ENCODE measurements at regions of chr1 and their contacts with region 1.

Region 1: GRCh38 chr1:151459331-151460046 is at the start of gene POGZ:
- DNase-seq: peak; percentile 89 to 97 (median 95)
- ATAC-seq: peak; percentile 69
- H3K4me3 ChIP-seq: peak within 1 kb of the TSS; percentile 75 to 79
- H3K4me3 Mint-ChIP-seq: peak within 1 kb of the TSS; percentile 89
- H3K27ac ChIP-seq: peak within 1 kb of the TSS; percentile 73 to 88
- H3K27ac Mint-ChIP-seq: peak within 1 kb of the TSS; percentile 93
- H3K4me1 ChIP-seq: peaks cover 18% of the 10 kb centered on the region
- H3K4me1 Mint-ChIP-seq: peaks cover 29% of the 10 kb centered on the region
- H3K27me3 ChIP-seq: peaks cover 0 to 1% of the 10 kb centered on the region in 2 experiments
- H3K27me3 Mint-ChIP-seq: peaks cover 24% of the 10 kb centered on the region
- CTCF ChIP-seq: no peak
- total RNA-seq, gene POGZ: 85.4 to 88.0 TPM

Region 2: GRCh38 chr1:150387200-150387599 is 1072.3 kb before region 1 on chr1:
- CTCF ChIA-PET with region 1: no interaction called
- POLR2A ChIA-PET with region 1: no interaction called
- intact Hi-C with region 1: no loop called
- DNase-seq: no peak
- ATAC-seq: no peak
- H3K4me3 ChIP-seq: no peak overlapping the region
- H3K4me3 Mint-ChIP-seq: no peak overlapping the region
- H3K27ac ChIP-seq: no peak overlapping the region
- H3K27ac Mint-ChIP-seq: peak overlapping the region; percentile 15
- H3K4me1 ChIP-seq: peaks cover 14% of the 10 kb centered on the region
- H3K4me1 Mint-ChIP-seq: peaks cover 54% of the 10 kb centered on the region
- H3K27me3 ChIP-seq: no peaks in the 10 kb centered on the region
- H3K27me3 Mint-ChIP-seq: no peaks in the 10 kb centered on the region
- CTCF ChIP-seq: no peak

Region 3: DNA sequence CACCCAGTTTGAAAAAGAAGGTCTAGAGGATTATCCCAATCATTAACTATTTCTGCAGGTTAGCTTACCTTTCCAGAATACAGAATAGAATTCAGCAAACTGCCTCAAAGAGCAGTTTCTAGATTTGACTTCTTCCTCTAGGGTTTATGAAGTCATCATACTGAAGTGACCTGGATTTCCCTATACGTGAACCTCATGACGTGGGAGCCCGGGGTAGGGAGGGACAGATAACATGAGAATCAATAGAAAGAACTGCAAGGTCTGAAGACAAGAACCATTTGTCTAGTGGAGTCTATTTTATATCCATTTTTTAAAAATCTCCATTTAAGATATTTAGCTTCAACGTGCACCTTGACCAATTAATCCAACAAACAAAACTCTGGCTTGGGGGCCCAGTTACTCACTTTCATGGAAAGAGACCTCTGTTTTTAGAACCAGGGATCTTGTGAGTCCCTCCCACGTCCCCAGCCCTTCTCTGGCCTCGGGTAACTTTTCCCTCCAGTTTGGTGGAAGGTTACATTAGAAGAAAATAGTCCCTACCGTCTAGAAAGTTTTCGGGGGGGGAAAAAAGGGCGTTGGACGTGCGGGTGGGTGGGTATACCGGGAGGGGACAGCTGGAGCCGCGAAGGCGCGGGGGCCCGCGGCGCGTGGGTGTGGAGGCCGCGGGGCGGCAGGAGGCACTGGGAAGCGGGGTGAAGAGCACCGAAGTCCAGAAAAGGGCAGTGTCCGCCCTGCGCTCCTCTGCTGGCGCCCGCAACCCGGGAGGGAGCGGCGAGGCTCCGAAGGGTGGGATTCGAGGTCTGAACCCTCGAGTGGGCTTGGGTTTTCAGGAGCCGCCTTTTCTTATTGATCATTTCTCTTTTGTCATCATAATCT is 13.6 kb after region 1 on chr1:
- CTCF ChIA-PET with region 1: interaction called, 3 read pairs
- POLR2A ChIA-PET with region 1: interaction called, 9 read pairs
- intact Hi-C with region 1: loop called (anchors 1 kb)
- DNase-seq: peak in 4 of 9 experiments; percentile 11 to 66 (median 46)
- ATAC-seq: peak; percentile 40
- H3K4me3 ChIP-seq: peak overlapping the region; percentile 50 to 66
- H3K4me3 Mint-ChIP-seq: peak overlapping the region; percentile 80
- H3K27ac ChIP-seq: no peak overlapping the region
- H3K27ac Mint-ChIP-seq: peak overlapping the region; percentile 18
- H3K4me1 ChIP-seq: peaks cover 4% of the 10 kb centered on the region
- H3K4me1 Mint-ChIP-seq: peaks cover 7% of the 10 kb centered on the region
- H3K27me3 ChIP-seq: no peaks in the 10 kb centered on the region
- H3K27me3 Mint-ChIP-seq: peaks cover 5% of the 10 kb centered on the region
- CTCF ChIP-seq: no peak

Region 4: DNA sequence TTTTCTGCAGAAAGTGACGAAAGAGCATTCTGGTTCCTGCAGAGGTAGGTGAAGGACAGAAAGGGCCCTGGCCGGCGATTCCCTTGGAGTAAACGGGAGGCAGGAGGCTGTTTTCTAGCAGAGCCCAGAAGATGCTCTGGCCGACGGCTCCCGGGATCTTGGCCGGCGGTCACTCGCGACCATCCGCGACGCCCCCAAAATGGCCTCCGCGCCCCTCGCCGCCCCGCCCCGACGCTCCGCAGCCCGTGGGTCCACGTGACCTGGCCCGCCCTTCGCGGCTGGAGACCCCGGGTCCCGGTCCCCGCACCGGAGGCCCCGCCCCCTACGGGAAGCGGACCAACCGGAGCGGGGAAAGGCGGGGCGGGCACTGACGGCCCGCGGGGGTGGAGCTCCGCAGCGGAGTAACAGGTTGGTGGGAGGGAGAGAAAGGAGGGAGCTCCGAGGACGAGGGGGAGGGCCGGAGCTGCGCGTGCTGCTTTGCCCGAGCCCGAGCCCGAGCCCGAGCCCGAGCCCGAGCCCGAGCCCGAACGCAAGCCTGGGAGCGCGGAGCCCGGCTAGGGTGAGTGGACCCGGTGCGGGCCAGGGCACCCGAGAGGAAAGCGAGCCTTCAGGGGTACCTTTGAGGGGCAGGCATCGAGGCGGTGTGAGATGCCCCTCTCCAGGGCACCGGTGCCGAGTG is 51.6 kb after region 1 on chr1 and contains the start of gene CGN:
- CTCF ChIA-PET with region 1: no interaction called
- POLR2A ChIA-PET with region 1: interaction called, 4 read pairs
- intact Hi-C with region 1: loop called (anchors 1 kb)
- DNase-seq: peak; percentile 62 to 94 (median 86)
- ATAC-seq: peak; percentile 97
- H3K4me3 ChIP-seq: peak within 1 kb of the TSS; percentile 65 to 79
- H3K4me3 Mint-ChIP-seq: peak within 1 kb of the TSS; percentile 94
- H3K27ac ChIP-seq: peak within 1 kb of the TSS; percentile 42 to 48
- H3K27ac Mint-ChIP-seq: peak within 1 kb of the TSS; percentile 80
- H3K4me1 ChIP-seq: peaks cover 21% of the 10 kb centered on the region
- H3K4me1 Mint-ChIP-seq: peaks cover 28% of the 10 kb centered on the region
- H3K27me3 ChIP-seq: no peaks in the 10 kb centered on the region
- H3K27me3 Mint-ChIP-seq: no peaks in the 10 kb centered on the region
- CTCF ChIP-seq: no peak
- total RNA-seq, gene CGN: 0.28 to 0.49 TPM

Region 5: DNA sequence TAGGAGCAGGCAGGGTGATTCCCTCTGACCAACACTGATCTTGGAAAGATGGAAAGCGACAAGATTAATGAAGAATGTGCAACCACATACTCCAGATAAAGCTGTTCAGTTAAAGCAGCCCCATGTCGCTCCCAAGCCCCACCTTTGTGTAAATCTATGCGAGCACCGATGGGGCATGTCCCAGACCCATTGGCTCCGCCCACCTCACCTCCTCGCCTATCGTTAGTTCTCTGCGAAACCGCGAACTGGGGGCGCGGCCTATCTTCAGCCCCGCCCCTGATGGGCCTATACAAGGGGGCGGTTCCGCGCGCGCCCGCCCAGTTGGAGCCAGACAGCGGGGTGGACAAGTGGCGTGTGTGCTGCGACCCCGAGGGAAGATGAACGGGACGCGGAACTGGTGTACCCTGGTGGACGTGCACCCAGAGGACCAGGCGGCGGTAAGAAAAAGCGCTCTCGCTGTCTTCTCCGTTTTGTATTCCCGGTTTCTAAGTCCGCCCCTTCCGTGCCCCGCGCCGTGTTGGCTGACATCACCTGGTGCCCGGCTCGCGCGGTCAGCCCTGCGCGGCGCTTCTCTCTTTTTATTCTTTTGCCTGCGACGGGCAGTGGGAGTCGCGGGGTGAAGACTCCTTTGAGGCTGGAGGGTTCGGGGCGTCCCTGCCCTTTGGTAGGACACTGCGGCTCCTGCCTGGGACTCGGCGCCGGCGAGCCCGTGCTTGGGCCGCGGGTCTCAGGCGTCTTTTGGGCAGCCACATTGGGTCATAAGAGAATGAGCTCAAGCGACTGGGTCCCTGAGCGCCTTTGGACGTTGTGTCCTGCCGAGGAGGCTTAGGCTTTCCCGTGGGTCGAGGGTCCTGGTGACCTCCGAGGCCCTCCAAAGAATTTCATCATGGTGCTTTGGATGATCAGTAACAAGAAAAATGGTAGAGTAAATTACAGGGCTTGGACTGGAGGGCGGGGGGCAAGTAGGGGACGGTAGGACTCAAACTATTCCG is 80.8 kb after region 1 on chr1 and contains the start of gene TUFT1:
- CTCF ChIA-PET with region 1: no interaction called
- POLR2A ChIA-PET with region 1: no interaction called
- intact Hi-C with region 1: loop called (anchors 1 to 5 kb)
- DNase-seq: peak; percentile 86 to 97 (median 94)
- ATAC-seq: peak; percentile 99
- H3K4me3 ChIP-seq: peak within 1 kb of the TSS; percentile 74 to 78
- H3K4me3 Mint-ChIP-seq: peak within 1 kb of the TSS; percentile 95
- H3K27ac ChIP-seq: peak within 1 kb of the TSS in 1 of 2 experiments; percentile 29
- H3K27ac Mint-ChIP-seq: peak within 1 kb of the TSS; percentile 82
- H3K4me1 ChIP-seq: peaks cover 14% of the 10 kb centered on the region
- H3K4me1 Mint-ChIP-seq: peaks cover 21% of the 10 kb centered on the region
- H3K27me3 ChIP-seq: peaks cover 4 to 16% of the 10 kb centered on the region in 2 experiments
- H3K27me3 Mint-ChIP-seq: no peaks in the 10 kb centered on the region
- CTCF ChIP-seq: no peak
- total RNA-seq, gene TUFT1: 8.5 TPM

Region 6: DNA sequence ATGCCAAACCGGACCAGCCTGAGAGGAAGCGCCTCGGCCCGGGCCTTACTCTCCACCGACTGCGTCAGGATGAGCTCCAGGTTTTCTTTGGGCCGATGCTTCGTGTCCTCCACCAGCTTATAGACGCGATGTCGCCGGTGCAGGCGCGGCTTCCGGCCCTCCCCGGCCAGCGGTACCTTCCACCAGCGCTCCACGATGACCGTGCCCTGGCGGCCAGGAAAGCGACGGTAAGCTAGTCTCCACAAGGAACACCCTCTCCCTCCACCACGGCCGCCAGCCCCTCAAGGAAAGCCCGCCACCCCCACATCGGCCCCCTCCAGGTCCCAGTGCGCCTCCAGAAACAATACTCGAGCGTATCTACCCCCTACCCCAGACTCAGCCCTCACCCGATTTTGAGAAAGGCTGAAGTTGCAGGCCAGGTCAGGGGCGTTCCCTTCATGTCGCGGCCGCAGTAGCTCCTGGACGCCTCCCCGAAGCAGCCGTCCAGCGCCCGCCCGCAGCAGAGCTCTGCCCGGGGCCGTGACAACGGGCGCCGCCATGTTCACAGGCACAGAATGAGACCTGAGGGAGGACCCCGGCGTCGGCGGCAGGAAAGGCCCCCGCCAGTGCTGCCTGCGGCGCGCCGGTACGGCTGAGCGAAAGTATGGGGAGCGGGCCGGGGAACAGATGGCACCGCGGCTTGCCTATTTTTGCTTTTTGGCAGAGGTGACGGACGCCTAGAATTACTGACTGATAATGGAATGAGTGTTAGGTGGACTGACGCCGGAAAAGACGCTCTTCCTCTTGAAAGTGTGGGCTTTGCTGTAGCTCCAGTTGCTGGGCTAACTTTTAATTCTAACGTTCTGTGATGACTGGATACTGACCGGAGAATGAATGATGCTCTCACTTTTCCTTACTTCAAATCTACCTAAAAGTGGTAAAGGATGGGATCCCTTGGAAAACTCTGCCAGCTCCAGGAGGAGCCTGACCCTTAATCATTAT is 303.7 kb after region 1 on chr1 and contains the start of gene MRPL9:
- CTCF ChIA-PET with region 1: interaction called, 3 read pairs
- POLR2A ChIA-PET with region 1: no interaction called
- intact Hi-C with region 1: loop called in 1 of 2 experiments (anchors 1 kb)
- DNase-seq: peak; percentile 75 to 89 (median 83)
- ATAC-seq: peak; percentile 99
- H3K4me3 ChIP-seq: peak within 1 kb of the TSS; percentile 78 to 88
- H3K4me3 Mint-ChIP-seq: peak within 1 kb of the TSS; percentile 90
- H3K27ac ChIP-seq: peak within 1 kb of the TSS; percentile 72 to 92
- H3K27ac Mint-ChIP-seq: peak within 1 kb of the TSS; percentile 96
- H3K4me1 ChIP-seq: peaks cover 12% of the 10 kb centered on the region
- H3K4me1 Mint-ChIP-seq: peaks cover 20% of the 10 kb centered on the region
- H3K27me3 ChIP-seq: no peaks in the 10 kb centered on the region
- H3K27me3 Mint-ChIP-seq: no peaks in the 10 kb centered on the region
- CTCF ChIP-seq: no peak
- total RNA-seq, gene MRPL9: 176 to 186 TPM

Region 7: DNA sequence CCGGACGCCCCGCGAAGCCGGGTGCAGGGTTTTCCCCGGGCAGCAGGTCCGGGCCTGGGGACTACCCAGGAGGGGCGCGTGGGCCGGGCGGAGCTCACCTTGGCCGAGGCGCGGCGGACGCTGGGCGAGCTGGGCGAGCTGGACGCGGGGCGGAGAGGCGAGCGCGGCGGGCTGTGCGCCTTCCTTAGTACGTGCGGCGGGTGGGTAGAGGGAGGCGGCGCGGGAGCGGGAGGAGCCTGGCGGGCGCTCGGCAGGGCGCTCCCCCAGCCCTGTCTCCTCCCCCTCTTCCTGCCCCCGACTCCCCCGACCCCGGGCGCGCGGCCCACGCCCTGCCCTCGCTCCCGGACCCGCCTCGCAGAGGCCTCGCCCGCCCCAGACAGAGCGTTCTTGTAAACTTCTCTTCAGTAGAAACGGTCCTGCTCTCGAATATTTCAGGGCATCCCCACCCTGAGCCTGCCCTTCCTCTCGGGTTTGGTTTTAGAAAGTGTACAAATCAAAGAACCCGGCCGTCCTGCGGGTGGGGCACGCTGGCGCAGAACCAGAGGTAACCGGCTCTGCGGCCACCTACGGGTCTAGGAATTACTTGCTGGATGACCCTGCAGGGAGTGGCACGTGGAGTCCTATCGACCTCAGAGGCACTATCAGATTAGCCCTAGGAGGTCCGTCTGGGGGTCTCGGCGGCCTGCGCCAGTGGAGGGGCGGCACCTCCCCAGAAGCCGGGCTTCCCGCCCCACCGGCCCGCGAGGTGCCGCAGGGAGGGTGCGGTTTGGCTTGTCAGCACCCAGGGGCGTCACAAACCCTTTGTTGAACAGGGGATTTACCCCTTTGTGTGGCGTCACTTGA is 534.4 kb after region 1 on chr1 and contains the start of gene S100A10:
- CTCF ChIA-PET with region 1: no interaction called
- POLR2A ChIA-PET with region 1: no interaction called
- intact Hi-C with region 1: loop called in 1 of 2 experiments (anchors 10 kb)
- DNase-seq: peak; percentile 58 to 92 (median 82)
- ATAC-seq: peak; percentile 86
- H3K4me3 ChIP-seq: peak within 1 kb of the TSS; percentile 78 to 94
- H3K4me3 Mint-ChIP-seq: peak within 1 kb of the TSS; percentile 98
- H3K27ac ChIP-seq: peak within 1 kb of the TSS; percentile 82 to 91
- H3K27ac Mint-ChIP-seq: peak within 1 kb of the TSS; percentile 97
- H3K4me1 ChIP-seq: peaks cover 48% of the 10 kb centered on the region
- H3K4me1 Mint-ChIP-seq: peaks cover 50% of the 10 kb centered on the region
- H3K27me3 ChIP-seq: no peaks in the 10 kb centered on the region
- H3K27me3 Mint-ChIP-seq: no peaks in the 10 kb centered on the region
- CTCF ChIP-seq: no peak
- total RNA-seq, gene S100A10: 132 to 138 TPM

Measured in CD8-positive, alpha-beta T cell (primary cell).